Panc1 (cell line): ENCODE measurements at regions of chr7 and their contacts with region 1.

Region 1: GRCh38 chr7:41351091-41351490 is 351.8 kb downstream of the INHBA start:
- DNase-seq: no peak
- ATAC-seq: no peak
- H3K4me3 ChIP-seq: no peak overlapping the region
- H3K27ac ChIP-seq: no peak overlapping the region
- H3K4me1 ChIP-seq: no peaks in the 10 kb centered on the region
- H3K27me3 ChIP-seq: no peaks in the 10 kb centered on the region
- CTCF ChIP-seq: no peak

Region 2: GRCh38 chr7:41367967-41368882 is 17.1 kb after region 1 on chr7:
- CTCF ChIA-PET with region 1: no interaction called
- POLR2A ChIA-PET with region 1: interaction called, 11 read pairs
- in situ Hi-C with region 1: no loop called
- intact Hi-C with region 1: no loop called
- DNase-seq: no peak
- ATAC-seq: no peak
- H3K4me3 ChIP-seq: no peak overlapping the region
- H3K27ac ChIP-seq: no peak overlapping the region
- H3K4me1 ChIP-seq: no peaks in the 10 kb centered on the region
- H3K27me3 ChIP-seq: no peaks in the 10 kb centered on the region
- CTCF ChIP-seq: no peak